ENCODE measurements at regions of chr1 and their contacts with region 1.

Region 1: DNA sequence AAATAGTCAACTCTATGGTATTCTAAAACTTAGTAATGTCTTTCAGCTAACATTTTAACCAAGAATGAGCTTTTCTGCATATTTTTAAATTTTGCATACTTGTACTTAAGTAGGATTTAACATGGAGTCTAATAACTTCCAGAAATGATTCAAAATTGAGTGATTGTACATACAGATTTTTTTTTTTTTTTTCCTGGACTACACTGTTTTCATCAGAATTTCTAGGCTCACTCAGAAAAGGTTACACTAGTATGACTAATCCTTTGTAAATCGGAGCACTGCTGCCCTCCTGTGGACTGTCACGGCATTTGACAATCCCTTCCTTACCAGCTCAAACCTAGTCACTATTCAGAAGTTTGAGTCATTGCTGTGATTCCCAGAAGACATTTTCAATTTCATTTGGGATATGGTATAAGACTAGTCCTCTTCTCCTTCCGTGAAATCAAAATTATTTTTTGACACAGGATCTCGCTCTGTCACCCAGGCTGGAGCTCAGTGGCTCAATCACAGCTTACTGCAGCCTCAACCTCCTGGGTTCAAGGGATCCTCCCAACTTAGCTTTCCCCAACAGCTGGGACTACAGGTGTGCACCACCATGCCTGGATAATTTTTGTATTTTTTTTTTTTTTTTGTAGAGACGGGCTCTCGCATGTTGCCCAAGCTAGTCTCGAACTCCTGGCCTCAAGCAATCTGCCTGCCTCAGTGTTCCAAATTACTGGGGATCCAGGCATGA is 45.5 kb downstream of the CD46 start:
- DNase-seq: peak; percentile 96
- ATAC-seq: peak; percentile 91
- H3K4me3 ChIP-seq: no peak overlapping the region
- H3K27ac ChIP-seq: no peak overlapping the region
- H3K4me1 ChIP-seq: peaks cover 5% of the 10 kb centered on the region; the same call in 1 of the 2 replicates
- H3K27me3 ChIP-seq: no peaks in the 10 kb centered on the region
- CTCF ChIP-seq: peak; percentile 86

Region 2: GRCh38 chr1:207069858-207070506 is 727.4 kb before region 1 on chr1:
- CTCF ChIA-PET with region 1: interaction called, 13 read pairs
- POLR2A ChIA-PET with region 1: no interaction called
- intact Hi-C with region 1: no loop called
- DNase-seq: no peak
- ATAC-seq: no peak
- H3K4me3 ChIP-seq: no peak overlapping the region
- H3K27ac ChIP-seq: no peak overlapping the region
- H3K4me1 ChIP-seq: peaks cover 16% of the 10 kb centered on the region
- H3K27me3 ChIP-seq: no peaks in the 10 kb centered on the region
- CTCF ChIP-seq: no peak

Region 3: GRCh38 chr1:207619871-207620542 is 177.4 kb before region 1 on chr1:
- CTCF ChIA-PET with region 1: interaction called, 11 read pairs
- POLR2A ChIA-PET with region 1: no interaction called
- intact Hi-C with region 1: no loop called
- DNase-seq: peak; percentile 81
- ATAC-seq: peak; percentile 97
- H3K4me3 ChIP-seq: no peak overlapping the region
- H3K27ac ChIP-seq: no peak overlapping the region
- H3K4me1 ChIP-seq: no peaks in the 10 kb centered on the region
- H3K27me3 ChIP-seq: peaks cover 36% of the 10 kb centered on the region
- CTCF ChIP-seq: peak; percentile 96

Region 4: DNA sequence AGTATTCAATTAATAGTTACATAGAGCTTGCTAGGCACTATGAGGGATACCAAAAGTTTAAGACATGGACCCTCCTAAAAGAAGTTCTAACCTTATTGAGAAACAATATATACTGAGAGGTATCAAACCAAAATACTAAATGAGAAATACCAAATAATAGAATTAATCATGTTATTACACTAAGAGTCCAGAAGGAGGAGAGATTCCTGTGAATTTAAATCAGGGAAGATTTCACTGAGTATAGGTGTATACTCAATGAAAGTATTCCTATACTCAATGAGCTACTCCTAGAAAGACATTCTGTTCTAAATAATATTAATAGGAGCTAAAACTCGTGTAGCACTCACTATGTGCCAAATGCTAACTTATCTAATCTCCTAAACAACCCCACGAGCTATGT is 143.1 kb before region 1 on chr1:
- CTCF ChIA-PET with region 1: interaction called, 8 read pairs
- POLR2A ChIA-PET with region 1: no interaction called
- intact Hi-C with region 1: loop called (anchors 1 kb)
- DNase-seq: peak; percentile 58
- ATAC-seq: peak; percentile 79
- H3K4me3 ChIP-seq: no peak overlapping the region
- H3K27ac ChIP-seq: no peak overlapping the region
- H3K4me1 ChIP-seq: no peaks in the 10 kb centered on the region
- H3K27me3 ChIP-seq: peaks cover 65% of the 10 kb centered on the region
- CTCF ChIP-seq: peak; percentile 65

Region 5: GRCh38 chr1:207698822-207699483 is 98.4 kb before region 1 on chr1:
- CTCF ChIA-PET with region 1: interaction called, 7 read pairs
- POLR2A ChIA-PET with region 1: no interaction called
- intact Hi-C with region 1: loop called (anchors 2 kb)
- DNase-seq: peak; percentile 93
- ATAC-seq: peak; percentile 96
- H3K4me3 ChIP-seq: no peak overlapping the region
- H3K27ac ChIP-seq: no peak overlapping the region
- H3K4me1 ChIP-seq: no peaks in the 10 kb centered on the region
- H3K27me3 ChIP-seq: no peaks in the 10 kb centered on the region
- CTCF ChIP-seq: peak; percentile 96

Region 6: DNA sequence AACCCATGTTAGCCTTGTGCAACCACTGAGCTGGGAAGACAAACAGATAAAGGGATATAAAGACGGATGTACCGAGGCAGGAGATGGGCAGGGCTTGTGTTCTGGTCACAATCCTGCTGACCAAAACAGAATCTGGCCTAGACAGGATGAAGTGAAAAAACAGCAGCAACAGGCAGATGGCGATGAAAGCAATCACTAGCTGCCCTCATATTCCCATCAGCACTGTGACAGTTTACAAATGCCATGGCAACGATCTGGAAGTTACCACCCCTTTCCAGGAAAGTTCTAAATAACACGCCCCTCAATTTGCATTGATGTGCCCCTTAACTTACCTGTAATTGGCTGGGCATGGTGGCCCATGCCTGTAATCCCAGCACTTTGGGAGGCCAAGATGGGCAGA is 86.1 kb before region 1 on chr1:
- CTCF ChIA-PET with region 1: interaction called, 5 read pairs
- POLR2A ChIA-PET with region 1: no interaction called
- intact Hi-C with region 1: loop called (anchors 1 kb)
- DNase-seq: peak; percentile 69
- ATAC-seq: peak; percentile 70
- H3K4me3 ChIP-seq: no peak overlapping the region
- H3K27ac ChIP-seq: no peak overlapping the region
- H3K4me1 ChIP-seq: peaks cover 25% of the 10 kb centered on the region
- H3K27me3 ChIP-seq: no peaks in the 10 kb centered on the region
- CTCF ChIP-seq: peak; percentile 55

Region 7: DNA sequence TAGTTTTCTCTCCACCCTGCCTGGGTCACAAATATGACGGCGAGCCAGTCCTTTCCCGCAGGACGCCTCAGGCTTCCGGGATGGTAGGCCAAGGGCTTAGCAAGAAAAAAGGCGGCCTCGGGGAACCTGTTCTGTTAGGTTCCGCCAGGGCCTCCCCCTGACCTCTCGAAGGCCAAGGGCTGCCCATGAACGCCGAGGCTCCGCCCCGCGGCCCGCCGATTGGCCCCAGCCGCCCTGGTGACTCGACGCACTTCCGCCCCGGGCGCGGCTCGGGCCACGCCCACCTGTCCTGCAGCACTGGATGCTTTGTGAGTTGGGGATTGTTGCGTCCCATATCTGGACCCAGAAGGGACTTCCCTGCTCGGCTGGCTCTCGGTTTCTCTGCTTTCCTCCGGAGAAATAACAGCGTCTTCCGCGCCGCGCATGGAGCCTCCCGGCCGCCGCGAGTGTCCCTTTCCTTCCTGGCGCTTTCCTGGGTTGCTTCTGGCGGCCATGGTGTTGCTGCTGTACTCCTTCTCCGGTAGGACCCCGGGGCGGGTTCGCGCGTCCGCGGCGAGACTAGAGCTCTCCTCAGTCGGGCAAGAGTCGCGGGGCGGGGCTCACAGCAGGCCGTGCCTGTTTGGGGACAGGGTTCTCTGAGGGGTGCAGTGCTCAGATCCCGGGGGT is 45.5 kb before region 1 on chr1 and contains the start of gene CD46:
- CTCF ChIA-PET with region 1: interaction called, 5 read pairs
- POLR2A ChIA-PET with region 1: no interaction called
- intact Hi-C with region 1: loop called (anchors 2 kb)
- DNase-seq: peak; percentile 100
- ATAC-seq: peak; percentile 80
- H3K4me3 ChIP-seq: peak within 1 kb of the TSS; percentile 89
- H3K27ac ChIP-seq: peak within 1 kb of the TSS; percentile 89
- H3K4me1 ChIP-seq: peaks cover 75% of the 10 kb centered on the region
- H3K27me3 ChIP-seq: no peaks in the 10 kb centered on the region
- CTCF ChIP-seq: no peak
- total RNA-seq, gene CD46: 116 and 119 TPM in 2 replicates

Region 8: GRCh38 chr1:207848234-207848633 is 50.8 kb after region 1 on chr1:
- CTCF ChIA-PET with region 1: no interaction called
- POLR2A ChIA-PET with region 1: no interaction called
- intact Hi-C with region 1: no loop called
- DNase-seq: peak; percentile 98
- ATAC-seq: peak; percentile 98
- H3K4me3 ChIP-seq: peak overlapping the region; percentile 42; the same call in 1 of the 2 replicates
- H3K27ac ChIP-seq: peak overlapping the region; percentile 95
- H3K4me1 ChIP-seq: peaks cover 40% of the 10 kb centered on the region
- H3K27me3 ChIP-seq: no peaks in the 10 kb centered on the region
- CTCF ChIP-seq: no peak

Measured in PC-3 (cell line).